T47D (cell line): ENCODE measurements at regions of chr5 and their contacts with region 1.

Region 1: GRCh38 chr5:60856066-60856465 is 12.0 kb upstream of the ELOVL7 start:
- DNase-seq: no peak

Region 2: DNA sequence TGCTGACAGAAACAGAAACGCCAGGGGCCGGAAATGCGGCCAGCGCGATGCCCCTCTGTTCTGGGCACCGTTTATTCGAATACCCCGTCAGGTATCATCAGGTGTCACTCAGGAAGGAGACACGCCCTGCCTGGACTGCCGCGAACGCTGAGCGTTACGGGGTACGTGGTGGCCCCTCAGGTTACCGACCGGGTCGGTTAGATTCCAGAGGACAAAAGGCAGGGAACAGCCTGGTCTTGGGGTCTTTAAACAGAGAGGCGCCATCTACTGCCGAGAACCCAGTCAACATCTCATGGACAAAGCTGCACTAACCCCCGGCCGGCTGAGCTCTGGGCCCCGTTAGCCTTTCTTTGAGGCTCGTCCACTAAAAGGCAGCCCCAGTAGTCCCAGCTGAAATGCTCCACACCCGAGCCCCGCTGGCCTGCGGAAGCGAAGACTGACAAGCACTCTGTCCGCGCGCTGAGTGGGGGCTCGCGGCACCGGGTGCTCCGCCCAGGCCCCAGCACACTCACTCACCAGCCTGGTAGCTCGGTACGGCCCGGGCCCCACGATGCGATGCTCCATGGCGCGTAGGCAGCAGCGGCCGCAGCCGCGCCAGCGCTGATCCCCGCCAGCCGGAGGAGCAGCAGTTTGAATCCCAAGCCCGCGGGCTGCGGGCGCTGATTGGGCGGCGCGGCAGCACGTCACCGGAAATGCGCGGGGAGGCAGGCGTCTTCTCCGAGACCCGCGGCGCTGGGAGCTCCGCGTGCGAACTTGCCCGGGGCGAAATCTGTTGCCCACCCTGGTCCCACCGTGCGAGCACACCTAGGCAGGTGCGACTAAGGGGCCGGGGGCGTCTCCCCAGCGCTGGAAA is 156.3 kb before region 1 on chr5 and contains the start of gene DEPDC1B:
- in situ Hi-C with region 1: loop called (anchors 25 kb)
- DNase-seq: peak; percentile 80 to 93